ENCODE measurements at regions of chr5 and their contacts with region 1.

Region 1: GRCh38 chr5:131453826-131454225 is 181.2 kb downstream of the RAPGEF6 start:
- DNase-seq: no peak
- H3K4me3 ChIP-seq: no peak overlapping the region
- H3K27ac ChIP-seq: no peak overlapping the region
- H3K4me1 ChIP-seq: no peaks in the 10 kb centered on the region
- H3K27me3 ChIP-seq: no peaks in the 10 kb centered on the region

Region 2: DNA sequence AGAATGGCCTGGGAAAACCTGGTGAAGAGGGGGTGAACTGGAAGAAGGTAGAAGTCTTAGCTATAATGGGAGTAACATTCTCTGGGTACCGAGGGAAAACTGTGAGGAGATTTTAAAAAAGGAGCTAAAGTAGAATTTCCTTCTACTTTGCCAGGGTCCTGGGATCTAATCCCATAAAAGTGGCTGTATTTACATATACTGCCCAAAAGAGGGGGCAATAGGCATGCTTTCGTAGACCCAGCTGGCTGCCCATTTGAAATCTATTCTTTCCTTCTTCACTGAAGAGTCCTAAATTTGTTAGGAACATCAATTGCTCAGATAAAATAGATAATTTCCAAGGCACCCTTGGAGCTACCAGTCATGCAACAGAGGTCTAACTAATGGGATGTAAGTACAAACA is 30.8 kb before region 1 on chr5:
- CTCF ChIA-PET with region 1: interaction called, 11 read pairs
- POLR2A ChIA-PET with region 1: no interaction called
- DNase-seq: peak; percentile 24 to 43 (median 26)
- H3K4me3 ChIP-seq: no peak overlapping the region
- H3K27ac ChIP-seq: no peak overlapping the region
- H3K4me1 ChIP-seq: peaks cover 0 to 2% (median 0%) of the 10 kb centered on the region in 4 experiments
- H3K27me3 ChIP-seq: no peaks in the 10 kb centered on the region

Measured in common myeloid progenitor, CD34-positive (primary cell).